ENCODE measurements at regions of chr15 and their contacts with region 1.

Region 1: DNA sequence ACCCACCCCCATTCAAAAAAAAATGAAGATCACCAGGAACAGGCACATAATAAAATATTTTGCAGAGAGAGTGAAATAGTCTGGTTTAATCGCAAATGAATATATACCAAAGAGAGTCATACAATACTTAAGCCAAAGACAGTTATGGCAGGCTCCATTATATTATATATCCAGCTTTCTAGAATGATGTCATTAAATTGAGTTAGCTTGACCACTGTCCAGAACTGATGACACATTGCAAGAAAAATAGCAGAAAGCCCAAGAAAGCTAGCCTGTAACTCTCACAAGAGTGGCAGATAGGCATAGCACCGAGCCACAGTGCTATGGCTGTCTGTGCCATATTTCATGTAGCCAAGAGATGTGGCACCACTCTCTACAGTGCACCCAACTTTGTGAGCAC is 231.9 kb upstream of the SEMA6D start:
- DNase-seq: no peak
- ATAC-seq: no peak
- H3K4me3 Mint-ChIP-seq: no peak overlapping the region
- H3K27ac Mint-ChIP-seq: no peak overlapping the region
- H3K4me1 Mint-ChIP-seq: no peaks in the 10 kb centered on the region
- H3K27me3 Mint-ChIP-seq: no peaks in the 10 kb centered on the region

Region 2: DNA sequence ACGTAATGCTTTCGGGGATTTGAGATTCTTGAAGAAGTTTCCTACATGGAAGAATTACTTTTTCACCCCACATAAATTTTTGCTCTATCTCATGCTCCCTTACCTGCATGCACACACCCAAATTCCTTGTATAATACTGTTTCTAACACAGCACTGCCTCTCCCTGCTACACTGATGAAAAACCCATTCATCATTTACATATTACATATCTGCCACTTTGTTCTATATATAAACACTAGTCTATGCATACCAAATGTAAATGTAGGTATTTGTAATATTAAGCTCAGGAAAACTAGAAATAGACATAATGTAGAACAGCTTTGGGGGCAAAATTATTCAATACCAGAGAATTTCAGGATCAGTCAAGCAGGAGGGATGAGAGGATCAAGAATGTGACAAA is 49.3 kb after region 1 on chr15:
- CTCF ChIA-PET with region 1: no interaction called
- POLR2A ChIA-PET with region 1: no interaction called
- intact Hi-C with region 1: loop called in 1 of 2 experiments (anchors 5 kb)
- DNase-seq: no peak
- ATAC-seq: no peak
- H3K4me3 Mint-ChIP-seq: no peak overlapping the region
- H3K27ac Mint-ChIP-seq: no peak overlapping the region
- H3K4me1 Mint-ChIP-seq: no peaks in the 10 kb centered on the region
- H3K27me3 Mint-ChIP-seq: peaks cover 4% of the 10 kb centered on the region

Measured in activated CD4-positive, alpha-beta T cell treated with anti-CD3 and anti-CD28 coated beads for 36 hours (primary cell).